Lower leg skin (tissue), 4 donors: ENCODE measurements at regions of chr3 and their contacts with region 1.

Region 1: GRCh38 chr3:57038466-57039164 is 21.8 kb upstream of the SPATA12 start:
- DNase-seq: no peak
- H3K4me3 ChIP-seq: no peak overlapping the region
- CTCF ChIP-seq: no peak
- POLR2A ChIP-seq: no peak

Region 2: GRCh38 chr3:57017459-57017845 is 21.2 kb before region 1 on chr3:
- intact Hi-C with region 1: loop called (anchors 1 kb)
- DNase-seq: no peak
- H3K4me3 ChIP-seq: no peak overlapping the region
- CTCF ChIP-seq: no peak
- POLR2A ChIP-seq: no peak